HepG2 (cell line): ENCODE measurements at regions of chr6 and their contacts with region 1.

Region 1: DNA sequence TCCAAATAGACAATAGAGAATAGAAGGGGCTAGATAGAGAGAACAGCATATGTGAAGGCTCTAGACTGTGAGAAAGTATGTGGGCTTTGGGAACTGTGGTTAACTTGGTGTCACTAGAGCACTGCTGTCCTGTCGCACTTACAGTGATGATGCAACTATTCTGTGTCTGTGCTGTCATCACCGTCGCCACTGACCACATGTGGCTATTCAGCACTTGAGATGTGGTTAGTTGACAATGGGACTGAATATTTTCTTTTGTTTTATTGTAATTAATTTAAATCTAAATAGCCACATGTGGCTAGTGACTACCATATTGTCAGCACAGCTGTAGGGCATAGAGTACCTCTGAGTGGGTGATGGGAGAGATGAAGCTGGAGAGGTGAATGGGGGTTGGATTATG is 39.0 kb upstream of the IFNGR1 start:
- DNase-seq: no peak
- ATAC-seq: no peak
- H3K4me3 ChIP-seq: no peak overlapping the region
- H3K27ac ChIP-seq: no peak overlapping the region
- H3K4me1 ChIP-seq: peaks cover 45% of the 10 kb centered on the region
- H3K27me3 ChIP-seq: no peaks in the 10 kb centered on the region
- CTCF ChIP-seq: no peak
- EP300 ChIP-seq: no peak
- POLR2A ChIP-seq: no peak
- RAD21 ChIP-seq: no peak

Region 2: GRCh38 chr6:137218917-137219663 is 39.1 kb before region 1 on chr6 and contains the start of gene IFNGR1:
- CTCF ChIA-PET with region 1: no interaction called
- POLR2A ChIA-PET with region 1: no interaction called
- in situ Hi-C with region 1: no loop called
- intact Hi-C with region 1: loop called (anchors 5 kb)
- DNase-seq: peak; percentile 98
- ATAC-seq: peak; percentile 93
- H3K4me3 ChIP-seq: peak within 1 kb of the TSS; percentile 87 to 93 (median 89)
- H3K27ac ChIP-seq: peak within 1 kb of the TSS; percentile 88
- H3K4me1 ChIP-seq: peaks cover 57% of the 10 kb centered on the region
- H3K27me3 ChIP-seq: peaks cover 0 to 4% of the 10 kb centered on the region in 2 experiments; a peak in 1 of 5 replicates
- CTCF ChIP-seq: no peak; the same call in 1 of the 2 replicates
- EP300 ChIP-seq: peak in 1 of 2 experiments; percentile 81; a peak in 3 of 4 replicates
- POLR2A ChIP-seq: peak; percentile 93 to 97
- RAD21 ChIP-seq: peak; percentile 55
- total RNA-seq, gene IFNGR1: 48.9 and 82.8 TPM in 2 replicates